ENCODE measurements at regions of chr2 and their contacts with region 1.

Region 1: DNA sequence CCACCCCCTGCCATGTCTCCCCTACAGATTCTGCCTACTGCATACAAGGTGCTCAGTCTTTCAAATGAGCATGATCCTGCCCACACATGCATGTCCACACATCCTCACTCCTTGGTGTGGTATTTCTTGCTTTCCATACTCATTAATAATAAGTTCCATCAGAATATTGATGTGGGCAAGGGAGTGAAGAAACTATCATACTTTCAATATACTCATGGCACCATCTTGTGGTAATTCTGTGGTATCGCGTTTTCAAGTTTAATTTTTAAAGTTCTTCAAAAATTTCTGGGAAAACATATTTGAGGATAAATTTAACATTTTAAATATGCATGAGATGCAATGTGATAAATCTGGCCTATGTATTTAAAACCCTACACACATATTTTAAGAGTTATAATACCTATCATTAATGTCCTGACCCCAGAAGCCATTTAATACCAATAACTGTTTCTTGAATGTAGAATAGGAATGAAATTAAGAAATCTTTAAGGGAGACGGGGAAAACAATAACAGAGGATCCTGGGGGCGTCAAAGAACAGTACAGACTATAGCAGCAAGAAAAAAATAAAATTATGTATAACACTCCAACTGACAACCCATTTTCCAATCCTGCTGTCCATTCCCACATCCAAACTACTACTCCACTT is 110.1 kb downstream of the ZNF385B start:
- DNase-seq: no peak
- H3K4me3 ChIP-seq: no peak overlapping the region
- H3K27me3 ChIP-seq: no peaks in the 10 kb centered on the region
- CTCF ChIP-seq: peak; percentile 52

Region 2: GRCh38 chr2:179410552-179411356 is 340.5 kb before region 1 on chr2:
- CTCF ChIA-PET with region 1: interaction called, 14 read pairs
- POLR2A ChIA-PET with region 1: no interaction called
- DNase-seq: no peak
- H3K4me3 ChIP-seq: no peak overlapping the region
- H3K27me3 ChIP-seq: no peaks in the 10 kb centered on the region
- CTCF ChIP-seq: peak; percentile 79

Measured in BJ (cell line).